PC-9 (cell line): ENCODE measurements at regions of chr4 and their contacts with region 1.

Region 1: GRCh38 chr4:155629183-155629825 is 37.3 kb upstream of the GUCY1A1 start:
- DNase-seq: no peak
- H3K4me3 ChIP-seq: no peak overlapping the region
- H3K27ac ChIP-seq: no peak overlapping the region
- H3K4me1 ChIP-seq: no peaks in the 10 kb centered on the region
- H3K27me3 ChIP-seq: no peaks in the 10 kb centered on the region
- CTCF ChIP-seq: no peak

Region 2: GRCh38 chr4:155552180-155552579 is 77.1 kb before region 1 on chr4:
- CTCF ChIA-PET with region 1: no interaction called
- POLR2A ChIA-PET with region 1: no interaction called
- intact Hi-C with region 1: loop called (anchors 2 kb)
- DNase-seq: no peak
- H3K4me3 ChIP-seq: no peak overlapping the region
- H3K27ac ChIP-seq: no peak overlapping the region
- H3K4me1 ChIP-seq: no peaks in the 10 kb centered on the region
- H3K27me3 ChIP-seq: no peaks in the 10 kb centered on the region
- CTCF ChIP-seq: no peak